Breast epithelium (tissue), 4 donors: ENCODE measurements at regions of chr17 and their contacts with region 1.

Region 1: DNA sequence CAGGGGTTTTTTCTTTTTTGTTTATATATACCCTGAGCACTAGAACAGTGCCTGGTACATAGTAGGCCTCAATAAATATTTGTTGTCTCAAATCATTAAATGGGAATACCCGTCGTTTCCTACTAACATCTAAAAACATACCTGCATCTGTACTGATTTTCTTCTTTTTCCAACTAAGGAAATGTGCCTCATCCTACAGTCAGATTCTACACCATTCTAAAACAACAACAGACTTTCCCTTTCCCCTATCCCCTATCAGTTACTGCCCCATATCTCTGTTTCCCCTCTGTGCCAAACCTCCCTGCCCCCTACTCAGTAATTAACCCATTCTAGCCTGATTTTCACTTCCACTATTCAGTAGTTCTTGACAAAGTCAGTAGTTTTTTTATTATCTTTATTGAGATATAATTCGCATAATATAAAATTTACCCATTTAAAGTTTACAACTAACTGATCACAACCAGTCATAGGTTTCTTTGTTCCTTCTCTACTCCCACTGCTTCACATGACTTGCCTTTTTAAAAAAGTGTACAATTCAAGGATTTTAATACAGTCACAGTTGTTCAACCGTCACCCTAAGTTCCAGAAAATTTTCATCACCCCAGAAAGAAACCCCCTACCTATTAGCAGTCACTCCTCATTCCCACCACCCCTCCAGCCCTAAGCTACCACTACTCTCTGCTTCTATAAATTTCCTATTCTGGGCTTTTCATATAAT is 162.7 kb downstream of the TRIM37 start:
- DNase-seq: no peak
- H3K4me3 ChIP-seq: no peak overlapping the region
- H3K27ac ChIP-seq: no peak overlapping the region
- H3K4me1 ChIP-seq: no peaks in the 10 kb centered on the region
- H3K27me3 ChIP-seq: no peaks in the 10 kb centered on the region
- CTCF ChIP-seq: no peak
- POLR2A ChIP-seq: no peak

Region 2: DNA sequence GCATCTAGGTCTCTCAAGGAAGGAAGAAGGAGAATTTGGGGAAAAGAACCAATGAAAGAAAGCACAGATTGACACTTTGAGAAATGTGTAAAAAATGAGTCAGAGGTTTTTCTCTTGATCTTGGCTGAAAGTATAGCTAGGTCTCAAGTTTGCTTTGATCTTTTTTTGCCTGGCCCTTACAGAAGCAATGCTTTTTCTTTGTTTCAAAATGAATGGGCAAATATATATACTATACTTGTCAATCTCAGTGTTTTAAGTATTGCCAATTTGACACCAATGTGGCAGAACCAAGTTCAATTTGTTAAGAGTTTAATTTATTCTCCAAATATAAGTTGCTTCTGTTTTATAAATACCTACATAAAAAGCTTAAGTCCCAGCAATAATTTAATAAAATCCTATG is 68.7 kb before region 1 on chr17:
- intact Hi-C with region 1: no loop called
- DNase-seq: no peak
- H3K4me3 ChIP-seq: no peak overlapping the region
- H3K27ac ChIP-seq: no peak overlapping the region
- H3K4me1 ChIP-seq: no peaks in the 10 kb centered on the region
- H3K27me3 ChIP-seq: no peaks in the 10 kb centered on the region
- CTCF ChIP-seq: no peak
- POLR2A ChIP-seq: no peak

Region 3: DNA sequence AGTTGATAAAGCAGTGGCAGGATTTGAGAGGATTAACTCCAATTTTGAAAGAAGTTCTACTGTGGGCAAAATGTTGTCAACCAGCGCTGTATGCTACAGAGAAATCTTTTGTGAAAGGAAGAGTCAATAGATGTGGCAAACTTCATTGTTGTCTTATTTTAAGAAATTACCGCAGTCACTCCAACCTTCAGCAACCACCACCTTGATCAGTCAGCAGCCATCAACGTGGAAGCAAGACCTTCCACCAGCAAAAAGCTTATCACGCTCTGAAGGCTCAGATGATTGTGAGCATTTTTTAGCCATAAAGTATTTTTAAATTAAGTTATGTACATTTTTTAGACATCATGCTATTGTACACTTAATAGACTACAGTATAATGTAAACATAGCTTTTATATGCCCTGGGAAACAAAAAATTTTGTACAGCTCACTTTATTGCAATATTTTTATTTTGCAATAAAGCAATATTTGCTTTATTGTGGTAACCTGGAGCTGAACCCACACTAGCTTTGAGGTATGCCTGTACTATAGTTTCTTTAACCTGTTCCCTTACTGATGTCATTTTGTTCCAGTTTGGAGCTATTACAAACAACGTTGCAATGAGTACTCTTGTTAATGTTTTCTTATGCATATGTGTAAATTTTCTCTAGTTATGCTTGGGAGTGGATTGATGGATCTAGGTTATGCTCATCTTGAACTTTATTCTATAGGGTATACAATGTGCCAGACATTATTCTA is 43.7 kb before region 1 on chr17:
- intact Hi-C with region 1: loop called (anchors 2 kb)
- DNase-seq: no peak
- H3K4me3 ChIP-seq: no peak overlapping the region
- H3K27ac ChIP-seq: no peak overlapping the region
- H3K4me1 ChIP-seq: no peaks in the 10 kb centered on the region
- H3K27me3 ChIP-seq: no peaks in the 10 kb centered on the region
- CTCF ChIP-seq: no peak
- POLR2A ChIP-seq: no peak

Region 4: GRCh38 chr17:59056857-59057256 is 112.8 kb after region 1 on chr17:
- intact Hi-C with region 1: no loop called
- DNase-seq: no peak
- H3K4me3 ChIP-seq: no peak overlapping the region
- H3K27ac ChIP-seq: no peak overlapping the region
- H3K4me1 ChIP-seq: no peaks in the 10 kb centered on the region
- H3K27me3 ChIP-seq: no peaks in the 10 kb centered on the region
- CTCF ChIP-seq: no peak
- POLR2A ChIP-seq: no peak